ENCODE measurements at regions of chr5 and their contacts with region 1.

Region 1: GRCh38 chr5:98963019-98963418 is 34.2 kb upstream of the CHD1 start:
- DNase-seq: no peak
- H3K4me3 ChIP-seq: no peak overlapping the region
- H3K27ac ChIP-seq: no peak overlapping the region
- H3K4me1 ChIP-seq: no peaks in the 10 kb centered on the region
- H3K27me3 ChIP-seq: no peaks in the 10 kb centered on the region
- CTCF ChIP-seq: no peak
- EP300 ChIP-seq: no peak
- POLR2A ChIP-seq: no peak

Region 2: DNA sequence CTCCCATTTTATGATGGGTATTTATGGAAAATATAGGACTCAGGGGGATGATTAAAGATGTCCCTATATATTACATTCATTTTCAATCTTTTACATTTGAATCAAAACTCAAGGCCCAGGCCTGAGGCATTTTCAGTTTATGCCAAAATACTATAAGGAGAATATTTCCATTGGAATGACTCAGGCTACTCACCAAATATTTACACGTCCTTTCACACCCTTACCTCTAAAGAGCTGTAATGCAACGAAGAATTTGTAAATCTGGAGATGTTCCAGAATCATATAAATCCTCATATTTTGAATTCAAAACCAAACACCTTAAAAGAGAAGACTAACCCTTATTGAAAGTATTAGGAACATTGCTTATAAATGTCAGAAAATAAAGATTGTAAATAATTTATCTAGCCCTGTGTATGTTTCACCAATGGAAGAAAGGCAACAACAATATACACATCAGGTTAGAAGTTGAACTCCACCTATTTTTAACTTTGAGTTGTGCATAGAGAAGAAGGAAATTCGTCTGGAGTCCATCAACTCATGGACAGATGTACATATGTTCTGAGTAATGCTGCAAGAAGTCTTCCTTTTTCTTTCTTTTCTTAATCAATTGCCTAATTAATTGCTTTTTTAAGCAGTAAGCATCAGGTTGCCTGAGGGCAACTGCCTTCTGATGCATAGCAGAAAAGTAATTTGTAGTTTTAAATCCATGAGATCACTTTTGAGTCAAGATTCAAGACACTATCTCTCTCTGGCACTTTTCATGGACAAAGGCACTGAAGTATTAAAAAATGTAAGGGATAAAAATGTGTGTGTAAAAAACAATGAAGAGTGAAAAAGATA is 768.9 kb before region 1 on chr5:
- intact Hi-C with region 1: loop called in 1 of 4 experiments (anchors 5 kb)
- DNase-seq: no peak
- H3K4me3 ChIP-seq: no peak overlapping the region
- H3K27ac ChIP-seq: no peak overlapping the region
- H3K4me1 ChIP-seq: no peaks in the 10 kb centered on the region
- H3K27me3 ChIP-seq: no peaks in the 10 kb centered on the region
- CTCF ChIP-seq: no peak
- EP300 ChIP-seq: no peak
- POLR2A ChIP-seq: no peak

Measured in ovary (tissue), 10 donors.